ENCODE measurements at regions of chr12 and their contacts with region 1.

Region 1: DNA sequence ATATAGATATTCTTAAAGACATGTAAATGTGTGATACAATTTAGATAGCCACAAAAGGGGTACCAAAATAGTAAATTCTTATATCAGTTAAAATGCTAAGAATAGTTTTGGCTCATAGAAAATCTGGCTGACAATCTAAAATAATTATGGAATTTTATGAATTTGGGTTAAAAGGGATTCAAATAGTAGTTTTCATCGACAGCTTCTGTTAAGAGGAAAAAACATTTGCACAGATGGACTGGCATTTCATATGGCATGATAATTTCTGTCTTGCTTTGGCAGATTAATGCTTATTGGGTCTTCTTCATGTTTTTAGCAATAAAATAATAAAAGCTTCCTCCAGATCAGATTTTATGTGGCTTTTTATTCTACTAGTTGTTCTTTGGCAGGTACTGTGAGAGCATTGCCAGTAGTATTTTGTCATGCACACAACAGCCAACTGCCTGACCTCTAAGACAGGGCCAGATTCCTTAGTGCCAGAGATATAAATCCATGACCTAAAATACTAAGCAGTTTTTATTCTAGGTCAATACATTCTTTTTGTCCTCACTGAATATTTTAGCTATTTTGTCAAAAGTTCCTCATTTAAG is 9.1 kb downstream of the ABCD2 start:
- DNase-seq: no peak
- H3K4me3 ChIP-seq: no peak overlapping the region
- H3K27ac ChIP-seq: no peak overlapping the region
- H3K4me1 ChIP-seq: peaks cover 4 to 10% (median 6%) of the 10 kb centered on the region in 4 donors
- H3K27me3 ChIP-seq: no peaks in the 10 kb centered on the region
- CTCF ChIP-seq: no peak
- EP300 ChIP-seq: no peak
- POLR2A ChIP-seq: no peak

Region 2: DNA sequence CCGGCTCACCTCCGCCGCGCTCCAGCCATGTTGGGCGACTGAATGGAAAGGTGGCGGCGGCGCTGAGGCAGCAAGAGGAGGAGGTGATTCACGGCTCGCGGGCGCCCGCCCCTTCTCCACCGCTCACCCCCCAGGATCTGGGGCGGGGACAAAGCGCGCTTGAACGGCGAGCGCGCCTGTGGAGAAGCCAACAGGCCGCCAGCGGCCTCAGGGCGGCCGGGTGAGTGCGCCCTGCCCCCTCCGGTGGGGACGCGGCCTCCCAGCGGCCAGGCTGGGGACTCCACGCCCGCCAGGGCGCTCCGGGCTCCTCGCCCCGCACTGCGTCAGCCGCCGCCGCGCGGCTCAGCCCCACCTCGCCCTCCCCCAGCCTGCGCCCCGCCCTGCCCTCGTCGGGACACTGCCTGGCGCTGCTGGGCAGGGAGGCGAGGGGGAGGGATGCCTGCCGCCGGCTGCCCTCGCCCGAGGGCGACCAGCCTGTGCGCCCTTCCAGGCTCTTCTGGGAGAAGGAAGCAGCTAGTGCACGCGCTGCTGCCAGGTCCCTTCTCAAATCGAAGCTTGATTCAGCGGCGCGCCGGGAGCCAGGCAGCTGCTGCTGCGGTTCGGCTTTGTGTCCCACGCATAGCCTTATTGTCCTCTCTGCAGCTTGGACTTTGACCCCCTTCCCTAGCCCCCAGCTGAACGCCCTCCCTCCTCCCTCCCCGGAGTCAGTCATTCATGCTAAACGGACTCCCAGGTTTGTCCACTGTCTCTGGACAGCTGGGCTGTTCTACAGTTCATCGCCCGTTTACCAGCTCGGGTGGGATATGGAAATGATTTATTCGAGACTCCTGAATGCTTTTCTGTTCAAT is 167.2 kb before region 1 on chr12 and contains the start of gene KIF21A:
- intact Hi-C with region 1: loop called (anchors 5 kb)
- DNase-seq: peak; percentile 95
- H3K4me3 ChIP-seq: peak within 1 kb of the TSS; percentile 84 to 98 (median 94)
- H3K27ac ChIP-seq: peak within 1 kb of the TSS; percentile 87 to 93 (median 88)
- H3K4me1 ChIP-seq: peaks cover 12 to 28% (median 25%) of the 10 kb centered on the region in 4 donors
- H3K27me3 ChIP-seq: no peaks in the 10 kb centered on the region
- CTCF ChIP-seq: peak; percentile 42 to 93 (median 47)
- EP300 ChIP-seq: no peak
- POLR2A ChIP-seq: peak; percentile 44
- total RNA-seq, gene KIF21A: 9.3 to 17.4 (median 11.1) TPM

Region 3: GRCh38 chr12:39646963-39647362 is 36.4 kb after region 1 on chr12:
- intact Hi-C with region 1: no loop called
- DNase-seq: no peak
- H3K4me3 ChIP-seq: no peak overlapping the region
- H3K27ac ChIP-seq: no peak overlapping the region
- H3K4me1 ChIP-seq: peaks cover 0 to 6% (median 0%) of the 10 kb centered on the region in 4 donors
- H3K27me3 ChIP-seq: no peaks in the 10 kb centered on the region
- CTCF ChIP-seq: no peak
- EP300 ChIP-seq: no peak
- POLR2A ChIP-seq: no peak